Mammary epithelial cell (primary cell): ENCODE measurements at regions of chr10 and their contacts with region 1.

Region 1: DNA sequence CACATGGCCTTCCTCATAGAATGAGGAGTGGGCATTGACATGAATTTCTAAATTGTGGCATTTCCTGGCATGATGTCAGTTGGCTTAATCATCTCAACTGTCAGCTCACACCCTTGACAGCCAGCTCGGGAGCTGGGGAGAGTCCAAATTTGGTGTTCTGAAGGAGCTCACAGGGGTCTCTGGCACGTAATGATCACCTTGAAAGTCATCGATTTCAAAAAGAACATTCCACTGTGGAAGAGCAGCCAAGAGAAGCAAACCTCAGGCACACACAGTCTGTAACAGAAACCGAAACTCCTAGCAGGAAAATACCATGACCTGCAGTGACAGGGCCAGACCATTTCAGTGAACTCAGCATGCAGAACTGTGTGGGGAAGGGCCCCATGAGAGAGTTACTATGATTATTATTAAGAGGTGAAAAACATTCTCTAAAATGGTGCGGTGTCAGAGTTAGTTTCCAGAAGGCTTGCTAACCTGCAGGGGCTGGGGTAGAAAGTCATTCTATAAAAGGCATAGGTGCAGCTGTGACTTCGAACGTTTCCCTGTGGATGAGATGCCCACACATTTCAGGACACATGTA is 26.4 kb upstream of the KLF6 start:
- DNase-seq: peak; percentile 98
- H3K4me3 ChIP-seq: no peak overlapping the region
- H3K27ac ChIP-seq: peak overlapping the region; percentile 100
- H3K4me1 ChIP-seq: peaks cover 50% of the 10 kb centered on the region
- H3K27me3 ChIP-seq: no peaks in the 10 kb centered on the region
- CTCF ChIP-seq: no peak

Region 2: GRCh38 chr10:3747984-3748383 is 63.4 kb before region 1 on chr10:
- CTCF ChIA-PET with region 1: no interaction called
- dilution Hi-C with region 1: no loop called
- in situ Hi-C with region 1: no loop called
- intact Hi-C with region 1: no loop called
- DNase-seq: no peak
- H3K4me3 ChIP-seq: no peak overlapping the region
- H3K27ac ChIP-seq: no peak overlapping the region
- H3K4me1 ChIP-seq: peaks cover 6% of the 10 kb centered on the region
- H3K27me3 ChIP-seq: no peaks in the 10 kb centered on the region
- CTCF ChIP-seq: no peak

Region 3: DNA sequence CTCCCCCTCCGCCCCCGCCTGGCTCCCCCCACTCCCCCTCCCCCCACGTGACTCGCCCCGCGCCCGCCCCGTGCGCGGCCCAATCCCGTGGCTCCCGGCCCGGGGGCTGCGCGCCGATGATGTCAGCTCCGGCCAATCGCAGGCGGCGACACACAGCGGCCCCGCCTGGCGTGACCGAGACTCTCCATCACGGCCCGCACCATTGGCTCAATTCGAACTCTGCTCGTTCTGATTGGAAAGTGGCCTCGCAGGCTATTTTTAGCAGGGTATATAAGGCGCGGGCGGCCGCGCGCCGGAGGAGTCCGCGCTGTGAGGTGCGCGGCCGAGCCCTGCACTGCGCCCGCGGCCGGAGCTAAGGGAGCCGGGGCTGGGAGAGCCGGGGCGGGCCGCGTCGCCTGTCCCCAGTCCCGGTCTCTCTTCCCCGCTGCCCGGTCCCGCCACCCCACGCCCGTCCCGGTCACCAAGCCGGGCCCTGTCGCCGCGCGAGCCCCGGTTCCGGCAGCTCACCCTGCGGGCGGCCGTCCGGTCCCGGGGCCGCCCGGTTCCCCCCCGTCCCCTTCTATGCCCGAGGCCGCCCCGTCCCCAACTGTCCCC is 26.0 kb before region 1 on chr10:
- CTCF ChIA-PET with region 1: no interaction called
- dilution Hi-C with region 1: no loop called
- in situ Hi-C with region 1: no loop called
- intact Hi-C with region 1: loop called (anchors 1 kb)
- DNase-seq: peak; percentile 97
- H3K4me3 ChIP-seq: peak overlapping the region; percentile 51 to 93 (median 78)
- H3K27ac ChIP-seq: peak overlapping the region; percentile 97
- H3K4me1 ChIP-seq: peaks cover 24% of the 10 kb centered on the region
- H3K27me3 ChIP-seq: no peaks in the 10 kb centered on the region
- CTCF ChIP-seq: no peak

Region 4: GRCh38 chr10:3873728-3874461 is 62.5 kb after region 1 on chr10:
- CTCF ChIA-PET with region 1: no interaction called
- dilution Hi-C with region 1: no loop called
- in situ Hi-C with region 1: no loop called
- intact Hi-C with region 1: loop called (anchors 1 kb)
- DNase-seq: peak; percentile 71
- H3K4me3 ChIP-seq: no peak overlapping the region
- H3K27ac ChIP-seq: peak overlapping the region; percentile 62
- H3K4me1 ChIP-seq: peaks cover 10% of the 10 kb centered on the region
- H3K27me3 ChIP-seq: no peaks in the 10 kb centered on the region
- CTCF ChIP-seq: no peak

Region 5: DNA sequence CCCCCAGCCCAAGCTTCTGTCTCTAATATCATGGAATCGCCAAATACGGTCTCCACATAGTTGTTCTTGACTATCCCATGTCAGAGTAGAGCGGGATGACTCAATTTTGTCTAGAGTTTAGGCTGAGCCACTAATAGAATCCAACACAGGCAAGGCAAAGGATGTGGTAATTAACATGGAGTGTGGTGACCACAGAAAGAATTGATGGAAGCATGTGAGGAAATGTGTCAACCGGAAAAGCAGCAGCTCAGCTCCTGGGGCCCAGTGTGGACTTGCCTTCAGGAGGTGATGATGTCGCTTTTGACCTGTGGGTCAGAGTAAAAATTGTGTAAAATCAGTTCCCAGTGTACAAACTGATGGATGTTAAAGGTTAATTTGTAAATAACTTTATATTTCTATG is 113.0 kb after region 1 on chr10:
- CTCF ChIA-PET with region 1: no interaction called
- dilution Hi-C with region 1: loop called (anchors 5 kb)
- in situ Hi-C with region 1: no loop called
- intact Hi-C with region 1: no loop called
- DNase-seq: peak; percentile 99
- H3K4me3 ChIP-seq: no peak overlapping the region
- H3K27ac ChIP-seq: peak overlapping the region; percentile 88
- H3K4me1 ChIP-seq: peaks cover 23% of the 10 kb centered on the region
- H3K27me3 ChIP-seq: no peaks in the 10 kb centered on the region
- CTCF ChIP-seq: no peak

Region 6: DNA sequence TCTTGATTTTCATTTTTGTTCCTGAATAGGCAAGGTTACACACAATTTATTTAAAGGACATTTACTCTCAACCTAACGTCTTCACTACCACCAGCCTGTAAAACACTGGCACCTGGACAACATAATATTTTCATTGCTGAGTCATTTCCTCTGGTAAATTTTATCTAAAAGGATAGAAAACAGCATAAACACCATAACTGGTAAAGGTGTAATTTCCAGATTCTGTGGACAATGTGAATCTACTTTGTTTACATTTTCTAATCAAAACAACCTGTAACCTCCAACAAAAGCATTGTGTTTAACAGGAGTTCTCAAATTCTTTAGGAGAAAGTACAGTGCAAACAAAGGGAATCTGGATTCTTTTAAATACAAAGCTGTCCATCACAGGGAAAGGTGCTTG is 542.6 kb after region 1 on chr10:
- CTCF ChIA-PET with region 1: no interaction called
- dilution Hi-C with region 1: loop called (anchors 25 kb)
- in situ Hi-C with region 1: no loop called
- intact Hi-C with region 1: loop called (anchors 2 kb)
- DNase-seq: peak; percentile 83
- H3K4me3 ChIP-seq: peak overlapping the region in 1 of 3 experiments; percentile 27
- H3K27ac ChIP-seq: peak overlapping the region; percentile 100
- H3K4me1 ChIP-seq: peaks cover 40% of the 10 kb centered on the region
- H3K27me3 ChIP-seq: no peaks in the 10 kb centered on the region
- CTCF ChIP-seq: no peak